Adrenal gland (tissue), 19 donors: ENCODE measurements at regions of chr9 and their contacts with region 1.

Region 1: DNA sequence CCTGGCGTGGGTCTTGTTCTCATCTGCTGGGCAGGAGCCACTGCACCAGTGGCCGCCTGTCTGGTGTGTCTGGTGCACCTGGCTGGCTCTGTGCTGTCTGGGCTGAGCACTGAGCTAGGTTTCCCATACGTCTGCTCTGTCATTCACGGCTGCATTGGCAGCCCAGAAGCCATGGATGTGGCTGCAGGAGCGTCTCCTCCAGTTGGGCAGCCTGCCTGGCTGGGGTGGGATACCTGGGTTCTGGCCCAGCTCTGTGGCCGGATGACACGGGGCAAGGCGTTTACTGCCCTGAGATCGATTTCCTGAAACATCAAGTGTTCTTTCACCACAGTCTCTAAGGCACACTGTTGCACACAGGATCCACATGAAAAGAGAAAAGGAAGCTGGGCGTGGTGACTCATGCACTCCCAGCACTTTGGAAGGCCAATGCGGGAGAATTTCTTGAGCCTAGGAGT is 25.5 kb upstream of the SLC25A51 start:
- DNase-seq: peak in 3 of 7 donors; percentile 43 to 61 (median 60)
- H3K4me3 ChIP-seq: no peak overlapping the region
- H3K27ac ChIP-seq: no peak overlapping the region
- H3K4me1 ChIP-seq: peaks cover 6 to 19% of the 10 kb centered on the region in 2 donors
- H3K27me3 ChIP-seq: no peaks in the 10 kb centered on the region
- CTCF ChIP-seq: no peak
- POLR2A ChIP-seq: no peak

Region 2: DNA sequence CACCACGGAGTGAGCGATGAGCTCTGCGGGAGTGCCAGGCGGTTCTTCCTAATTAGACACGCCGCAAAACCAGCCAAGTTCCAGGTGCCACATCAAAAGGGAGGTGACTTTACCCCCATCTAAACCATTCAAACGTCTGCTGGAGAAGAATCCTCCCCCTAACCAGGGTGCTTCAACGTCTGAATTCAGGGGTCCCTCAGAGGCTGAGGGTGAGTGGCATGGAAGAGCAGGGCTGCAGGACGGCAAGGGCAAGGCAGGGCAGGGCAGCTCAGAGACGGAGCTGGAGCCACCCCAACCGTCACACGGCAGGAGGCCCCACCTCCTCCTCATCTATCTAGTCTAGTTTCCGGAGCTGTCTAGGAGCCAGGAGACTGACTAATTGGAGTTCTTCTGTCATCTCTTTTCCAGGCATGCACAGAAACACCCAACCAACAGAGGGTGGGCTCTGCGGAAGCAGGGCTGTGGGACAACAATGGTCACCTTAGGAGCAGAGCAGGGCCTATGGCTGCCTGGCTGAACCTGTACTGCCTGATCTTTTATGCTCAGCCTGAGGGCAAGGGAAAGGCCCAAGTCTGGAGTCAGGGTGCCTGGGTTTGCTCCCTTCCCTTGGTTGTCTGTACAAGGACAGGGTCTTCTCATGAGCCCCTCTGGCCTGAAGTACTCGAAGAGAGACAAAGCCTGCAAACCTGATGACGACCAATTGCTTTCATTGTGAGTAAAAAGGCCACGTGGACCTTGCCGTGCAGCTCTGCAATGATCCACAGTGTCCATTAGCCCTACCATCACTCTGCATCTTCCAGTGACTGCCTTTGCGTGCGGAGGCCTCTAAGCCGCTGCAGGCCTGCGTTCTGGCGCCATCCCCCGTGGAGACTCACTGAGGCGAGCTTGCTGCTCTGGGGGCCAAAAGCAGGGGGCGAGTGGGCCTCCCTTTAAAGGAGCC is 55.5 kb after region 1 on chr9:
- intact Hi-C with region 1: loop called (anchors 5 kb)
- DNase-seq: peak; percentile 48 to 86 (median 77)
- H3K4me3 ChIP-seq: no peak overlapping the region
- H3K27ac ChIP-seq: peak overlapping the region in 1 of 5 donors; percentile 24
- H3K4me1 ChIP-seq: peaks cover 6 to 27% of the 10 kb centered on the region in 2 donors
- H3K27me3 ChIP-seq: no peaks in the 10 kb centered on the region
- CTCF ChIP-seq: no peak
- POLR2A ChIP-seq: no peak